Activated CD4-positive, alpha-beta T cell treated with anti-CD3 and anti-CD28 coated beads for 36 hours (primary cell): ENCODE measurements at regions of chr10 and their contacts with region 1.

Region 1: DNA sequence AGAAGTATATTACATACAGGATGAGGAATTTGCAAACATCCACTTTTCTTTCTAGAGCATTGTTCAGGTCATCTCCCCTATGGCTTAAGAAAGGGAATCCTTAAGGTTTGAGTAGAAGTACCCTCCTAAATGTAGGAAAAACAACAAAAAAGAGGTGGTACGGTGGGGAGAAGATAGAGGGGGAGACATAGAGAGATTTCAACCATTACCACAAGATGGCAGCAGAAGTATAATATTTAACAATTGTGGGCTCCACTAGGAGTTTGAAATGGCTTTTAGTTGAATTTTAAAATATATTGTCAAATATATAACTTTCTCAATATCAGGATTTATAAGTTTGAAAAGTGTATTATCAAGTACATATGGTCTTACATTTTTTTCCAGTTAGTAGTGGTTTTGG is 72.7 kb upstream of the PRKG1 start:
- DNase-seq: no peak
- ATAC-seq: no peak
- H3K4me3 Mint-ChIP-seq: no peak overlapping the region
- H3K27ac Mint-ChIP-seq: no peak overlapping the region
- H3K4me1 Mint-ChIP-seq: no peaks in the 10 kb centered on the region
- H3K27me3 Mint-ChIP-seq: peaks cover 14% of the 10 kb centered on the region

Region 2: GRCh38 chr10:50946991-50947781 is 54.4 kb before region 1 on chr10:
- CTCF ChIA-PET with region 1: no interaction called
- POLR2A ChIA-PET with region 1: no interaction called
- intact Hi-C with region 1: no loop called
- DNase-seq: no peak
- ATAC-seq: no peak
- H3K4me3 Mint-ChIP-seq: no peak overlapping the region
- H3K27ac Mint-ChIP-seq: no peak overlapping the region
- H3K4me1 Mint-ChIP-seq: no peaks in the 10 kb centered on the region
- H3K27me3 Mint-ChIP-seq: peaks cover 3% of the 10 kb centered on the region

Region 3: GRCh38 chr10:51063659-51064535 is 62.3 kb after region 1 on chr10:
- CTCF ChIA-PET with region 1: no interaction called
- POLR2A ChIA-PET with region 1: no interaction called
- intact Hi-C with region 1: no loop called
- DNase-seq: no peak
- ATAC-seq: no peak
- H3K4me3 Mint-ChIP-seq: no peak overlapping the region
- H3K27ac Mint-ChIP-seq: no peak overlapping the region
- H3K4me1 Mint-ChIP-seq: no peaks in the 10 kb centered on the region
- H3K27me3 Mint-ChIP-seq: peaks cover 7% of the 10 kb centered on the region

Region 4: DNA sequence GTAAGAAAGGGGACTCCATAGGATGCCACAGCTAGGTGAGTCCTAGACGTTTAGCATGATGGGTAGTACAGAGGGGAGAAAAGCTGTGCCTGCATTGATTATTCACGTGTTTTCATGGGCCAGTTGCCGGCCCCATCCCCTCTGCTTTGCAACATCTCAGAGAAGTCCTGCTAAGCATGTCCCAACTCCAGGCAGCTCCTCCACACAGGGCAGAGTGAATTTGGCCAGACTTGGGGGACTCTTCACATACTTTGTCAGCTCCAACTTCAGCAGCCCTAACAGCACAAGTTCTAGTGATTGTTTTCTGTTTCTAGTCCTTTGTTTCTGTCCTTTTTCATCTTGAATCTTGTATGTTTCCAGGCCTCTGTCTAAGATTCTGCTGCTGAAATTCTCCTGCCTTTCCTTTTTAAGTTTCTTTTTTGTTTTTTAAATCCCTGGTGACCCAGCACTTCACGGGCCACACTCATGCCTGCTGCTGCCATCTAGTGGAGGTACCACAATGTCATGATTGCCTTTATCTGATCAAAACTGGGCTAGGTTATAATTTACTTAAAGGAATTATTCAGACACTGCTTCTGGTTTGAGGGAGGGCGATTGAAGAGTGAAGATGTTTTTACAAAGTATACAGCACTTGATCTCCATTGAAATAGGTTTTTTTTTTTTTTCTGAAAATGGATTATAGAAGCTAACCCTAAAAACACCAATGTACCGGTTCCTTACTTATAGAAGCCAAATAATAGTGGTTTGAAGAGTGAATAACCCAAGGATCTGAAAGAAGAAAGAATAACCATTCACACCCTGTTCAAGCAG is 420.9 kb after region 1 on chr10:
- CTCF ChIA-PET with region 1: no interaction called
- POLR2A ChIA-PET with region 1: no interaction called
- intact Hi-C with region 1: loop called in 1 of 2 experiments (anchors 1 kb)
- DNase-seq: peak; percentile 59
- ATAC-seq: no peak
- H3K4me3 Mint-ChIP-seq: no peak overlapping the region
- H3K27ac Mint-ChIP-seq: no peak overlapping the region
- H3K4me1 Mint-ChIP-seq: no peaks in the 10 kb centered on the region
- H3K27me3 Mint-ChIP-seq: peaks cover 2% of the 10 kb centered on the region

Region 5: GRCh38 chr10:51950371-51950995 is 948.9 kb after region 1 on chr10:
- CTCF ChIA-PET with region 1: no interaction called
- POLR2A ChIA-PET with region 1: no interaction called
- intact Hi-C with region 1: loop called in 1 of 2 experiments (anchors 10 kb)
- DNase-seq: no peak
- ATAC-seq: no peak
- H3K4me3 Mint-ChIP-seq: no peak overlapping the region
- H3K27ac Mint-ChIP-seq: no peak overlapping the region
- H3K4me1 Mint-ChIP-seq: no peaks in the 10 kb centered on the region
- H3K27me3 Mint-ChIP-seq: peaks cover 2% of the 10 kb centered on the region

Region 6: DNA sequence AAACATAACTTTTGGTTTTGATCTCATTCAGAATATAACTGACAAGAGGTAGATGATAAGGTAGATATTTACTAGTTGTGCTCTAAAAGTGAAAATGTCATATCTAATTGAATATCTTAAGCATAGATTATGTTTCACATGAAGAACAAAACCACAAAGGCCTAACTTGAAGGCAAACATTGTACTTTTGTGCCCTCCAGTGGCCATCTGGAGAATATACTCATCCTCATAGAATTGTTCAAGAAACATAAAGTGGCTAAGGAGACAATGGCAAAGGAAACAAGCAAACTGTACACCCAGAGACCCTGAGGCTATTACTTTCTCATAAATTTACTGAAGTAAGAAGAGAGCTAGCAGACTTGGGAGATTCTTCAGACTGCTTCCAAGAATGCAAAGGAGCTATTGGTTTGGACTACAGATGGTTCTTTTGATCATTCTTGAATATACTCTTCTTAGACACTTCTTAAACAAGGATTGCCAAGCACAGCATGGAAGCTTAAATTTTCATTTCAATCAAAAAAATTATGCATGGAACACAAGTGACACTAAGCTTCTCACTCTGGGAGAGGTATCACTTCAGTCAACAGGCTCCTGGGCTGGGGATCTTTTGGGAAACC is 1214.3 kb after region 1 on chr10:
- CTCF ChIA-PET with region 1: interaction called, 5 read pairs
- POLR2A ChIA-PET with region 1: no interaction called
- intact Hi-C with region 1: loop called in 1 of 2 experiments (anchors 1 kb)
- DNase-seq: peak; percentile 52
- ATAC-seq: peak; percentile 74
- H3K4me3 Mint-ChIP-seq: no peak overlapping the region
- H3K27ac Mint-ChIP-seq: no peak overlapping the region
- H3K4me1 Mint-ChIP-seq: no peaks in the 10 kb centered on the region
- H3K27me3 Mint-ChIP-seq: no peaks in the 10 kb centered on the region